GM18951 (cell line): ENCODE measurements at regions of chr5 and their contacts with region 1.

Region 1: GRCh38 chr5:179516221-179516620 is 34.1 kb upstream of the RUFY1 start:
- POLR2A ChIP-seq: no peak

Region 2: DNA sequence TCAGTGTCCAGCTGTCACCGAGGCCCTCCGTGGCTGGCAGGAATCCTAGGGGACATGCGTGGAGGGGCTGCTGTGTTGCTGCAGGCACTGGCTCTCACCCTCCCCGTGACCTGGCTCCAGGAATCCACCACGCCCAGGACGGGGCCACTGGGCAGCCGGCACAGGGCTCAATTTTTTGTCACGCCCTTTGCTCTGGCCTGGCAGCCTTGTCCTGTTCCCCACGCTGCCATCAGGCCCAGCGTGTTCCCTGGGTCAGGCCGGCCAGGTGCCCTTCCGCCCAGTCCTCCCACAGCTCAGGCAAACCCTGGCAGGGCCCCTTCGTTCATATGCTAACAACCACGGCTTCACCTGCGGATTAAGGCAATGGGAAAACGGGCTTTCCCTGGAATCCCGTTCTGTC is 1557.5 kb before region 1 on chr5:
- in situ Hi-C with region 1: loop called (anchors 10 kb)
- POLR2A ChIP-seq: no peak

Region 3: DNA sequence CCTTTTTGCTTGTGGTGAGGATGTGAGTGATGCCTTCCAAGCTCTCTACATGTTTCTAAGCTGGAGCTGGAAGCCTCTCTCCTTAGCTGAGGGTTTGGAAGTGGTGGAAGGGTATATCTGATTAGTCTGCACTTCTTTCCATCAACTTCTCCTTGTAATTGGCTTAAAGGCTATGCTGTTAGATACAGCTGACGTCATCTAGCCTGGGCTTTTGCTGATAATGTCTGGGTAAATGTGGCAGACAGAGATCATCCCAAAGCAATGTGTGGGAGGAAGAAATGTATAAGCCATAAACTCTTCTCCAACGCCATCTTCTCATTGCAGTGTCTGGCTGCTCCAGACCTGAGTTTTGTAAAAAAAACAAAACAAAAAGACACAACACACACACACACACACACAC is 426.7 kb before region 1 on chr5:
- in situ Hi-C with region 1: no loop called
- POLR2A ChIP-seq: no peak